CD4-positive, alpha-beta T cell (primary cell): ENCODE measurements at regions of chr19 and their contacts with region 1.

Region 1: DNA sequence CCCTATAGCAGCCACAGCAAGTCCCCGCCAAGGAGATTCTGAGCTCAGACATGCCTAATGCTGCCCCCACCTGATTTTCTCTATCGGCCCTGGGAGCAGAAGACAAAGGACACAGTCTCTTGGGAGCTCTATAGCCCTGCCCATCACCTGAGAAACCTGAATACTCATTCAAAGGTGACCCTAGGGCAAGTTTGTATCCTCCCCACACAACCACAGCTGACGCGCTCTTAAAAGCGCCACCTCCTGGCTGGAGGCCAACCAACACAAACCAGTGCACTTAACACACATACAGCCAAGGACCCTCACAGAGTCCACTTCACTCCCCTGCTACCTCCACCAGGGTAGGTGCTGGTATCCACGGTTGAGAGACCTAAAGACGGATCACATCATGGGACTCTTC is 8.8 kb upstream of the IGFL4 start:
- DNase-seq: no peak
- ATAC-seq: no peak
- H3K4me3 ChIP-seq: no peak overlapping the region
- H3K4me3 Mint-ChIP-seq: no peak overlapping the region
- H3K27ac ChIP-seq: no peak overlapping the region
- H3K27ac Mint-ChIP-seq: no peak overlapping the region
- H3K4me1 ChIP-seq: no peaks in the 10 kb centered on the region
- H3K4me1 Mint-ChIP-seq: no peaks in the 10 kb centered on the region
- H3K27me3 ChIP-seq: peaks cover 19 to 23% of the 10 kb centered on the region in 2 experiments
- H3K27me3 Mint-ChIP-seq: peaks cover 87% of the 10 kb centered on the region
- CTCF ChIP-seq: no peak

Region 2: GRCh38 chr19:46173886-46174507 is 124.4 kb after region 1 on chr19:
- CTCF ChIA-PET with region 1: no interaction called
- POLR2A ChIA-PET with region 1: no interaction called
- intact Hi-C with region 1: loop called in 1 of 2 experiments (anchors 10 kb)
- DNase-seq: no peak
- ATAC-seq: no peak
- H3K4me3 ChIP-seq: no peak overlapping the region
- H3K4me3 Mint-ChIP-seq: no peak overlapping the region
- H3K27ac ChIP-seq: no peak overlapping the region
- H3K27ac Mint-ChIP-seq: no peak overlapping the region
- H3K4me1 ChIP-seq: no peaks in the 10 kb centered on the region
- H3K4me1 Mint-ChIP-seq: no peaks in the 10 kb centered on the region
- H3K27me3 ChIP-seq: peaks cover 4 to 8% of the 10 kb centered on the region in 2 experiments
- H3K27me3 Mint-ChIP-seq: peaks cover 64% of the 10 kb centered on the region
- CTCF ChIP-seq: no peak